Motor neuron (in vitro differentiated cells): ENCODE measurements at regions of chr5 and their contacts with region 1.

Region 1: DNA sequence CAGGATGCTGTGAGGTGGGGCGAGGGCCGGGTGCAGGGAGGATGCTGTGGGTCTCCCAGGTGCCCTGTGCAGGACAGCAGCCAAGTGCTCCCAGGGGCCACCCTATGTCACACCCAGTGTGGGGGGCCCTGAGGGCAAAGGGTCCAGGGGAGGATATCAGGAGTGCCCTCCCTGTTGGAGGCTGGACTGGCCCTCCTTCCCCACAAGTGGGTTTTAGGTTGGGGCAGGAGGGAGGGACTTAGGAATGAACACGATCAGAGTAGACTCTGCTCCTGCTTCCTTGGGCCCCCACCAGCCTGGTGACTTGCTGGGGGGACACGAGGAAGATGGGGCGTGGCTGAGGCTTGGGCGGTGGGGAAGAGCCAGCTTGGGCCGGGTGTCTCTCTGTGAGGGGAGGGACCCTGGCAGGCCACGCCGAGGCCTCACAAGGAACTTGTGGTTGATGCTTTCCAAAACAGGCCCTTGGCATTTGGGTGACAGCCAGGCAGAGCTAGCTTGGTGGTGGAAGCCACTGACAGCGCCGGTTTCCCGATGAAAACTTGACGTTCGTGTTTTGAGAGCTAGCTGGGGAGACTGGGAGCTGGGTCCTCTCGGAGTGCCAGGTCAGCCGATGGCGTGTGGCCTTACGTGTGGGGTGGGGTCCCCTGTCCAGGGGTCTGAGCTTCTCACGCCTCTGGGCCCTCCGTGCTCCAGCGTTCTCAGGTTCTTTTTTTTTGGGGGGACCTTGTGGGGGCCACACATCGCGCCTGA is 129.0 kb upstream of the LPCAT1 start:
- ATAC-seq: no peak
- H3K4me3 ChIP-seq: no peak overlapping the region
- H3K27ac ChIP-seq: no peak overlapping the region
- H3K4me1 ChIP-seq: peaks cover 0 to 5% of the 10 kb centered on the region in 2 donors

Region 2: GRCh38 chr5:945691-946551 is 706.9 kb before region 1 on chr5:
- in situ Hi-C with region 1: loop called in 1 of 9 experiments (anchors 10 kb)
- ATAC-seq: peak; percentile 53 to 94 (median 89)
- H3K4me3 ChIP-seq: no peak overlapping the region
- H3K27ac ChIP-seq: peak overlapping the region; percentile 29 to 44
- H3K4me1 ChIP-seq: peaks cover 40 to 48% of the 10 kb centered on the region in 2 donors

Region 3: DNA sequence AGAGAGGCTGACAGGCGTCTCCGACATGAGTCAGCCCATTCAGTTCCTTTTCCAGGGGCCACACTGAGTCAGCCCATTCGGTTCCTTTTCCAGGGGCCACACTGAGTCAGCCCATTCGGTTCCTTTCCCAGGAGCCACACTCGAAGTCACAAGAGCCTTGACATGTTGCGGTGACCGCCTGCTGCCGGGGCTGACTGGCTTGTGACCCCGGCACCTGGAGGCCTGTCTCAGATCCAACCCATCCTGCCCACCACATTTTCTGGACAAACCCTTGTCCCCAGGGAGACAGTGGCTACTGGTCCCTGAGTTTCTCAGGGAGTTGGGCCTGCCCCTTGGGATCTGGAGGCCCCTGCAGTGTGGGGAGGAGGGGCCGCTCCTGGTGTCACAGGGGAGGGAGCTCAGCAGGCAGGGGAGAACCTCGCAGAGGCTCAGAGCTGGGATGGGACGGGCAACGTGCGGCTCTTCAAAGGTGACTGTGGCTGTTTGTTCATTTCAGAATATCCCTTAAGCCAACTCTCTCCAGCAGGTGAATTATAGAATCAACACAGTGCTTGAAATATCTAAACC is 88.5 kb before region 1 on chr5:
- in situ Hi-C with region 1: no loop called
- ATAC-seq: peak in 4 of 8 experiments; percentile 15 to 75 (median 58)
- H3K4me3 ChIP-seq: no peak overlapping the region
- H3K27ac ChIP-seq: no peak overlapping the region
- H3K4me1 ChIP-seq: no peaks in the 10 kb centered on the region

Region 4: DNA sequence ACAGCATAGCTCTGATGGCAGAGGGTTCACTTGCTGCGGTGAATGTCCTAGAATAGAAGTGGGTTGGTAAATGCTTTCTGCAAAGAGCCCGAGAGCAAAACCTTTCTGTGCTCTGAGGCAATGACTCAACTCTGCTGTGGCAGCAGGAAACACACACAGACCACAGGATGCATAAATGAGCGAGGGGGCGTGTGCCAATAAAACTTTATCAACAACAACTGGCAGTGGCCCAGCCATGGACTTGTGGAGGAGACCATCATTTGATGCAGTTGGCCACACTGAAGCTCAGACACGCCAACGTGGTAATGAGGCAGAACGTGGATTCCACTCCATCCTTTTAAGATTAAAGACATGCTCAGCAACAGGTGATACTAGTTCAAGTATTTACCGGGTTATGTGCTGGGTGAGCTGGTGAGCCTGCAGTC is 140.1 kb after region 1 on chr5:
- in situ Hi-C with region 1: no loop called
- ATAC-seq: peak in 3 of 8 experiments; percentile 6 to 15 (median 11)
- H3K4me3 ChIP-seq: no peak overlapping the region
- H3K27ac ChIP-seq: no peak overlapping the region
- H3K4me1 ChIP-seq: peaks cover 18 to 23% of the 10 kb centered on the region in 2 donors